GM12878 (cell line): ENCODE measurements at regions of chr5 and their contacts with region 1.

Region 1: GRCh38 chr5:154857530-154858296 is 714 bp upstream of the CNOT8 start:
- DNase-seq: peak; percentile 62
- ATAC-seq: peak; percentile 78
- H3K4me3 ChIP-seq: peak overlapping the region; percentile 80
- H3K27ac ChIP-seq: peak overlapping the region; percentile 91
- H3K4me1 ChIP-seq: peaks cover 11% of the 10 kb centered on the region
- H3K27me3 ChIP-seq: no peaks in the 10 kb centered on the region
- CTCF ChIP-seq: 0 out of 6 replicates have a peak, but pooled peaks of 1 of the 3 experiments have one; percentile 5
- EP300 ChIP-seq: peak in 1 of 2 experiments; percentile 8; a peak in 1 of 4 replicates
- POLR2A ChIP-seq: peak; percentile 67; the same call in 1 of the 2 replicates
- RAD21 ChIP-seq: no peak

Region 2: GRCh38 chr5:153480401-153480800 is 1377.3 kb before region 1 on chr5:
- CTCF ChIA-PET with region 1: no interaction called
- POLR2A ChIA-PET with region 1: no interaction called
- RAD21 ChIA-PET with region 1: no interaction called
- SMC1A ChIA-PET with region 1: no interaction called
- in situ Hi-C with region 1: no loop called
- intact Hi-C with region 1: no loop called
- DNase-seq: peak; percentile 58
- ATAC-seq: peak; percentile 84
- H3K4me3 ChIP-seq: no peak overlapping the region
- H3K27ac ChIP-seq: no peak overlapping the region
- H3K4me1 ChIP-seq: no peaks in the 10 kb centered on the region; the same call in 1 of the 2 replicates
- H3K27me3 ChIP-seq: no peaks in the 10 kb centered on the region
- CTCF ChIP-seq: no peak
- EP300 ChIP-seq: no peak
- POLR2A ChIP-seq: no peak
- RAD21 ChIP-seq: 0 out of 2 replicates have a peak, but pooled peaks have one; percentile 1

Region 3: GRCh38 chr5:154663424-154663823 is 194.3 kb before region 1 on chr5:
- CTCF ChIA-PET with region 1: no interaction called
- POLR2A ChIA-PET with region 1: no interaction called
- RAD21 ChIA-PET with region 1: no interaction called
- SMC1A ChIA-PET with region 1: no interaction called
- in situ Hi-C with region 1: no loop called
- intact Hi-C with region 1: no loop called
- DNase-seq: no peak
- ATAC-seq: no peak
- H3K4me3 ChIP-seq: no peak overlapping the region
- H3K27ac ChIP-seq: no peak overlapping the region
- H3K4me1 ChIP-seq: no peaks in the 10 kb centered on the region
- H3K27me3 ChIP-seq: no peaks in the 10 kb centered on the region; a peak in 1 of 4 replicates
- CTCF ChIP-seq: no peak
- EP300 ChIP-seq: no peak
- POLR2A ChIP-seq: no peak
- RAD21 ChIP-seq: no peak

Region 4: DNA sequence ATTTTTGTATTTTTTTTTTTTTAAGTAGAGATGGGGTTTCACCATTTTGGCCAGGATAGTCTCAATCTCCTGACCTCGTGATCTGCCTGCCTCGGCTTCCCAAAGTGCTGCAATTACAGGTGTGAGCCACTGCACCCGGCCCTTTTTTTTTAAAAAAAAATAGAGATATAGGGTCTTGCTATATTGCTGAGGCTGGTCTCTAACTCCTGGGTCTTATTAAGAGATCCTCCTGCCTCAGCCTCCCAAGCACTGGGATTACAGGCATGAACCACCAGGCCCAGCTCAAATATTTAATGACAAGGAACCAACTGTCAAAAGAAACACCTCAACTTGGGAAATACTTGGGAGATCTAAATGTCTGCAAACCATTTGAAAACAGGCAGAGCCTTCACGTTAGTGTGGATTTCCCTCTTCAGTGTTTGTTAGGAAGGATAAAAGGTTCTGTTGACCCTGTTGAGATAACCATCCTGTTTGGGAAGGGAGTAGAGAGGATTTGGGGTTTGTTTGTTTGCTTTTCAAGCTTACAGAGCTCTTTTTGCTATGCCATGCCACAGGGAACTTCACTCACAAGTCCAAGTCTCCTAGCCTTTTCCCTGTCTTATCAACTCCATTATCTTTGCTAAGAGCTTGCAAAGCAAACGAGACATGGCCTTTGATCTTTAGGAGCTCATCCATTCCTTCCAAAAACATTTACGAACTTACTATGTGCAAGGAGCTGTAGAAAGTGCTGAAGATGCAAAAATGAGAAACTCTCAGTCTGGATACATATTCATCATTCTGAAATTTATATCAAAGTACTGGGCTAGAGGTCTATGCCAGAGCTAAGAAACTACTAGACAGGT is 14.8 kb before region 1 on chr5:
- CTCF ChIA-PET with region 1: interaction called, 5 read pairs
- POLR2A ChIA-PET with region 1: interaction called, 5 read pairs
- RAD21 ChIA-PET with region 1: no interaction called
- SMC1A ChIA-PET with region 1: interaction called, 5 read pairs
- in situ Hi-C with region 1: no loop called
- intact Hi-C with region 1: loop called (anchors 1 kb)
- DNase-seq: no peak
- ATAC-seq: no peak
- H3K4me3 ChIP-seq: no peak overlapping the region
- H3K27ac ChIP-seq: no peak overlapping the region
- H3K4me1 ChIP-seq: no peaks in the 10 kb centered on the region
- H3K27me3 ChIP-seq: no peaks in the 10 kb centered on the region
- CTCF ChIP-seq: no peak
- EP300 ChIP-seq: no peak
- POLR2A ChIP-seq: no peak
- RAD21 ChIP-seq: no peak

Region 5: GRCh38 chr5:154937718-154938466 is 80.2 kb after region 1 on chr5 and contains the start of gene GEMIN5:
- CTCF ChIA-PET with region 1: no interaction called
- POLR2A ChIA-PET with region 1: interaction called, 3 read pairs
- RAD21 ChIA-PET with region 1: interaction called, 7 read pairs
- SMC1A ChIA-PET with region 1: interaction called, 6 read pairs
- in situ Hi-C with region 1: no loop called
- intact Hi-C with region 1: loop called (anchors 2 kb)
- DNase-seq: peak; percentile 54
- ATAC-seq: peak; percentile 92
- H3K4me3 ChIP-seq: peak within 1 kb of the TSS; percentile 87
- H3K27ac ChIP-seq: peak within 1 kb of the TSS; percentile 64
- H3K4me1 ChIP-seq: peaks cover 6% of the 10 kb centered on the region
- H3K27me3 ChIP-seq: no peaks in the 10 kb centered on the region
- CTCF ChIP-seq: no peak
- EP300 ChIP-seq: 0 out of 4 replicates have a peak, but pooled peaks of 1 of the 2 experiments have one; percentile 24
- POLR2A ChIP-seq: peak; percentile 88
- RAD21 ChIP-seq: no peak
- polyA plus RNA-seq, gene GEMIN5: 6.3 to 6.8 TPM

Region 6: DNA sequence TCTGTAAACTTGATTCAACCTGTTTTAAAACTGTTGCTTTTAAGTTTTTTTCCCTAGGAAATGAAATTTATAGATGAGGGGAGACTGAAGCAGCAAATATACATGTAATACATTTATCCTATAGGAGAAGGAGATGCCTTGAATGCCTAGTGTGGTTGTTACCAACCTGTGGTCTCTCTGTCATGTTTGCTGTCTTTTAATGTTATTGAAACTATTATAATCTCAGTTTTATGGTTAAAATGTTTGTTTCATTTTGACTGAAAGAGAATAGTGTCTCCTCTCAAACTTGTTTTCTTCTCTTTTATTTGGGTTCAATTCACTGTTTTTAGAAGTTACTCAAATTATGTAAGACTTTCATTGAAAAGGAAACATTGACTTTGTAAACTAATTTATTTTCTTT is 99.0 kb after region 1 on chr5:
- CTCF ChIA-PET with region 1: no interaction called
- POLR2A ChIA-PET with region 1: no interaction called
- RAD21 ChIA-PET with region 1: no interaction called
- SMC1A ChIA-PET with region 1: no interaction called
- in situ Hi-C with region 1: no loop called
- intact Hi-C with region 1: no loop called
- DNase-seq: no peak
- ATAC-seq: no peak
- H3K4me3 ChIP-seq: no peak overlapping the region
- H3K27ac ChIP-seq: no peak overlapping the region
- H3K4me1 ChIP-seq: no peaks in the 10 kb centered on the region
- H3K27me3 ChIP-seq: no peaks in the 10 kb centered on the region
- CTCF ChIP-seq: no peak
- EP300 ChIP-seq: no peak
- POLR2A ChIP-seq: no peak
- RAD21 ChIP-seq: no peak

Region 7: GRCh38 chr5:155368490-155368889 is 510.8 kb after region 1 on chr5:
- CTCF ChIA-PET with region 1: no interaction called
- POLR2A ChIA-PET with region 1: no interaction called
- RAD21 ChIA-PET with region 1: no interaction called
- SMC1A ChIA-PET with region 1: no interaction called
- in situ Hi-C with region 1: no loop called
- intact Hi-C with region 1: no loop called
- DNase-seq: no peak
- ATAC-seq: no peak
- H3K4me3 ChIP-seq: no peak overlapping the region
- H3K27ac ChIP-seq: no peak overlapping the region
- H3K4me1 ChIP-seq: no peaks in the 10 kb centered on the region
- H3K27me3 ChIP-seq: no peaks in the 10 kb centered on the region
- CTCF ChIP-seq: no peak
- EP300 ChIP-seq: no peak
- POLR2A ChIP-seq: no peak
- RAD21 ChIP-seq: no peak